ENCODE measurements at regions of chr5 and their contacts with region 1.

Region 1: GRCh38 chr5:160439205-160439600 is 17.5 kb downstream of the PTTG1 start:
- DNase-seq: peak; percentile 93
- H3K4me3 Mint-ChIP-seq: peak overlapping the region; percentile 80
- H3K27ac Mint-ChIP-seq: peak overlapping the region; percentile 94
- H3K4me1 Mint-ChIP-seq: peaks cover 30% of the 10 kb centered on the region
- H3K27me3 Mint-ChIP-seq: no peaks in the 10 kb centered on the region

Region 2: DNA sequence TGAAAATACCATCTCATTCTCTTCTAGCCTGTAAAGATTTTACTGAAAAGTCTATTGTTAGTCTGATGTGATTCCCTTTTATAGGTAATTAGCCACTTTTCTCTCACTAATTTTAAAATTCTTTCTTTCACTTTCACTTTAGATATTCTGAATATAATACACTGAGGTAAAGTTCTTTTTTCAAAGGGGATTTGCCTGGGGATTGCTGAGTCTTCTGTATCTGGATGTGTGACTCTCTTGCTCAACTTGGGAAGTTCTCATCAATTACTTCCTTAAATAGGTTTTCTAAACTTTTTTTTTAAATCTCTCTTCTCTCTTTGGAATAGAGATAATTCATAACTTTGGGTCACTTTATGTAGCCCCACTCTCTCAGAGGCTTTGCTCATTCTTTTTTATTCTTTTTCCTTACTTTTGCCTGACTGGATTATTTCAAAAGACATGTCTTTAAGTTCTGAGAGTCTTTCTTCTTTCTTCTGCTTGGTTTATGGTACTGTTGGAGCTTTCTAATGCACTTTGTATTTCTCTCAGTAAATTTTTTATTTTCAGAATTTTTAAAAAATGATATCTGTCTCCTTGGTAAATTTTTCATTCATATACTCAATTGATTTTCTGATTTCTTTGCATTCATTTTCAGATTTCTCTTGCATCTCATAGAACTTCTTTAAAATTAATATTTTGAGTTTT is 1053.0 kb before region 1 on chr5:
- CTCF ChIA-PET with region 1: no interaction called
- POLR2A ChIA-PET with region 1: no interaction called
- intact Hi-C with region 1: no loop called
- DNase-seq: no peak
- H3K4me3 Mint-ChIP-seq: no peak overlapping the region
- H3K27ac Mint-ChIP-seq: no peak overlapping the region
- H3K4me1 Mint-ChIP-seq: no peaks in the 10 kb centered on the region
- H3K27me3 Mint-ChIP-seq: no peaks in the 10 kb centered on the region

Region 3: DNA sequence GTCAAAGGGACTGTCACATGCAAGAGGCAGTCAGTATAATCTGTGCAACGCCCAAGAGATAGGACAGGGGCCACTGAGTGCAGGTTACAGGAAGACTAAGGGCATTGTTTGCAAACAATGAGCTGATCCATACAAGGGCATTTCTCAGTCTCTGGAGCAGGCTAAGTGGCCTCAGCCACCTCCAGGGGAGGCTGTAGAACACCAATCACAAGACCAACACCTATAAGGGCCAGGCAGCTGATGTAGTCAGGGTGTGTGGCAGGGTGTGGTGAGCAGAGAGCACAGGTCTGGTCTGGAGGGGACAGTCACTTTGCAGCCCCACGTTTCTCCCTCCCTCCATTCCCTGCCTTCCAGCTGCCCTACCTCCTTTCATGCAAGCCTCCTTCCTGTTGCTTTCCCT is 606.1 kb before region 1 on chr5:
- CTCF ChIA-PET with region 1: no interaction called
- POLR2A ChIA-PET with region 1: no interaction called
- intact Hi-C with region 1: no loop called
- DNase-seq: no peak
- H3K4me3 Mint-ChIP-seq: no peak overlapping the region
- H3K27ac Mint-ChIP-seq: no peak overlapping the region
- H3K4me1 Mint-ChIP-seq: no peaks in the 10 kb centered on the region
- H3K27me3 Mint-ChIP-seq: peaks cover 26% of the 10 kb centered on the region

Region 4: DNA sequence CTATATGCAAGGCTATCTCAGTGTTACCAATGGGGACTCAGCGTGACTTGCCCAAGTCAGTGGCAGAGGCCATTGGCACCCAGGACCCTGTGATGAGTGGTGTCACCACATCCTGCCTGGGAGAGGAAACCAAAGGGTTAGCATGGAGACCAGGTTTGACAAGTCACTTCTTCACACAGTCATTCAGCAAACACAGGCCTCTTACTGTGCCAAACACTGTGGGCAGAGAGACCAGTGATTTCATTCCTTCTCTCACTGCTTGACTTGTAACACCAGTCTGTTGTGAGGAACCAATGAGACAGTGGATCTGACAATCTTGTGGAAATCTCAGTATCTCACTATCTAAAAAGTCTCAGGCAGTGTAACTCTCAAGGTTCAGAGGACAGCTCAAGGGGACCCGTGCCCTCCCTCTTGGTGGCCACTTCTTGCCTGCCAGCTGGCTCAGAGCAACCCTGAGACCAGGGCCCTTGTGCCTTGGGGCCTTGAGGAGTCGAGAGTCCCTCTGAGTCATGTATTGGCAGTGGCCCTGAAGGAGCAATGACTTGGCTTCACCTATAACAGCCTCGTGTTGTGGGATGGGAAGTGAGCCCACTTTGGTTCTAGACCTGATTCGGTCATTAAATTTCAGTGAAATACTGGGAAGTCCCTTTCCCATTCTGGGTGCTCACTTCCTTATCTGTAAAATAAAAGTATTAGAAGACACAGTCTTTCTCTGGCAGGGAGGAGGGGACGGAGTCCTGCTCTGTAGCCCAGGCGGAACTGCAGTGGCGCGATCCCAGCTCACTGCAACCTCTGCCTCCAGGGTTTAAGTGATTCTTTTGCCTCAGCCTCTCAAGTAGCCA is 208.3 kb before region 1 on chr5:
- CTCF ChIA-PET with region 1: no interaction called
- POLR2A ChIA-PET with region 1: no interaction called
- intact Hi-C with region 1: no loop called
- DNase-seq: peak; percentile 44
- H3K4me3 Mint-ChIP-seq: no peak overlapping the region
- H3K27ac Mint-ChIP-seq: no peak overlapping the region
- H3K4me1 Mint-ChIP-seq: no peaks in the 10 kb centered on the region
- H3K27me3 Mint-ChIP-seq: no peaks in the 10 kb centered on the region

Region 5: DNA sequence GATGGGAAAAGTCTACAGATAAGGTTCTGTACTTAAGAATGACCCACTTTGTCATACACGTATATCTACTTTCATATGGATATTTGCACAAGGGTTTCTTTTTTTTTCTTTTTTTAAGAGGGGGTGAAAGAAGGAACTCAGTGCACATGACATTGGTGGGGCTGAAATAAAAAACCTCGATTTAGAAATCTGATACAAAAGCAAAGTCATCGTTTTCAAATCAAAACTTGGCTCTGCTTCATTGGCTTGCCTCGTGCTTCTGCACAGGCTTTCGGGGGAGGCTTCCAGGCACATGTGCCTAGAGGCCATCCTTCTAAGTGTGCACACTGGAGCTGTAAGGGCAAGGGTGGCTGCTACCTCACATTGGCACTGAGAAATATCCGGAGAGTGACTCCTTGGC is 13.6 kb after region 1 on chr5:
- CTCF ChIA-PET with region 1: interaction called, 11 read pairs
- POLR2A ChIA-PET with region 1: no interaction called
- intact Hi-C with region 1: no loop called
- DNase-seq: no peak
- H3K4me3 Mint-ChIP-seq: no peak overlapping the region
- H3K27ac Mint-ChIP-seq: no peak overlapping the region
- H3K4me1 Mint-ChIP-seq: peaks cover 14% of the 10 kb centered on the region
- H3K27me3 Mint-ChIP-seq: peaks cover 2% of the 10 kb centered on the region

Region 6: DNA sequence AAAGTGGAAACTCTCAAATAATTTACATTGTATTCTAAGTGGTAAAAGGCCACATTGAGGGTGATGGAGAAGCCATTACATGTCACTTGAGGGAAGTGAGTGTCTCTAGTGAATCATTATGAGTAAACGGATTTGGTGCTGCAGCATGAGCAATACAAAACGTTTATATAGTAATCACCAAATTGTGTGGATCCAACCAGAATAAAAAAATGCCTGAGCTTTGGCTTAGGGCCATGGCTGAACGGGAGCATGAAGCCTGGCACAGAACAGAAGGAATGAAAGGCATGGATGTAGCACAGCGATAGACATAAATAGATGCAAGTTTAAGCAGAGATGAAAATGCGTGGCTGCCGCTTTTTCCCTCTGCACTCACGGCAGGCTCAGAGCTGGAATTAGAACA is 40.7 kb after region 1 on chr5:
- CTCF ChIA-PET with region 1: interaction called, 28 read pairs
- POLR2A ChIA-PET with region 1: interaction called, 5 read pairs
- intact Hi-C with region 1: no loop called
- DNase-seq: no peak
- H3K4me3 Mint-ChIP-seq: peak overlapping the region; percentile 30
- H3K27ac Mint-ChIP-seq: peak overlapping the region; percentile 79
- H3K4me1 Mint-ChIP-seq: peaks cover 75% of the 10 kb centered on the region
- H3K27me3 Mint-ChIP-seq: no peaks in the 10 kb centered on the region

Region 7: GRCh38 chr5:160539431-160539830 is 100.2 kb after region 1 on chr5:
- CTCF ChIA-PET with region 1: interaction called, 8 read pairs
- POLR2A ChIA-PET with region 1: no interaction called
- intact Hi-C with region 1: loop called (anchors 1 kb)
- DNase-seq: peak; percentile 84
- H3K4me3 Mint-ChIP-seq: no peak overlapping the region
- H3K27ac Mint-ChIP-seq: no peak overlapping the region
- H3K4me1 Mint-ChIP-seq: peaks cover 24% of the 10 kb centered on the region
- H3K27me3 Mint-ChIP-seq: no peaks in the 10 kb centered on the region

Region 8: DNA sequence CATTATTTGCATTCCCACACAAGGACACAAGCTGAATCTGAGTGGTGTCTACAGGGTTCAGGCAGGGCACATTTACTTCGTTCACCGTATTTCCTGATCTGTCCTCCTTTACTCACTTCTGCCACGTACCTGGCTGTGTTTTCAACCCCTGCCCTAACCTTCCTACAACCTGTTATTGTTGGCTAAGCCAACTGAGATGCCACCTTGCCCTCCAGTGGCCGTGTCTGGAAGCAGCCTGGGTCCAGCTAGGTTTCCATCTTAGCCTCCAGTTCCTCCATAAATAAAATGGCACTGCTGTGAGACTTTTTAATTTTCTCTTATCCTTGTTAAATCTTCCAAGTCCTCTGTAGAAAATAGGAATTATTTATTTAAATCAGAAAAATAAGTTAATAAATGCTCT is 348.0 kb after region 1 on chr5:
- CTCF ChIA-PET with region 1: interaction called, 30 read pairs
- POLR2A ChIA-PET with region 1: no interaction called
- intact Hi-C with region 1: loop called (anchors 1 kb)
- DNase-seq: peak; percentile 36
- H3K4me3 Mint-ChIP-seq: no peak overlapping the region
- H3K27ac Mint-ChIP-seq: no peak overlapping the region
- H3K4me1 Mint-ChIP-seq: no peaks in the 10 kb centered on the region
- H3K27me3 Mint-ChIP-seq: peaks cover 3% of the 10 kb centered on the region

Region 9: DNA sequence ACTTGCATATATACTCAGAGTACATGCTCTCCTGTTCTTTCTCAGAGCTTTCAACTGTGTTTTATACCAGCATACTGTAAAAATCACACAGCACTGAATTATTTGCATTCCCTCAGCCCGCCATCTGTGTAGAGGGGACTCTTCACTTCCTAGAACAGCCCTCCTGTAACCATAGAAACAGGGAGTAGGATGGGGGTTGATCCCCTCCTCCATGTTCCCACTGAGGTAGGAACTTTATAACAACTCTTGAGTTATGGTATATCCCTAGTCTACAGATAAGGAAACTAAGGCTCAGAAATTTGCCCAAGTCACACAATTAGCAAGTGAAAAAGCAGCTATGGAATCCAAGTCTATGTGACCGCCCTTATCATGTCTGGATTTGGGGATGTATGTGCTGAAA is 476.6 kb after region 1 on chr5:
- CTCF ChIA-PET with region 1: no interaction called
- POLR2A ChIA-PET with region 1: no interaction called
- intact Hi-C with region 1: no loop called
- DNase-seq: no peak
- H3K4me3 Mint-ChIP-seq: no peak overlapping the region
- H3K27ac Mint-ChIP-seq: no peak overlapping the region
- H3K4me1 Mint-ChIP-seq: no peaks in the 10 kb centered on the region
- H3K27me3 Mint-ChIP-seq: peaks cover 5% of the 10 kb centered on the region

Region 10: GRCh38 chr5:161544350-161544765 is 1105.2 kb after region 1 on chr5:
- CTCF ChIA-PET with region 1: interaction called, 4 read pairs
- POLR2A ChIA-PET with region 1: no interaction called
- intact Hi-C with region 1: loop called (anchors 10 kb)
- DNase-seq: peak; percentile 40
- H3K4me3 Mint-ChIP-seq: no peak overlapping the region
- H3K27ac Mint-ChIP-seq: no peak overlapping the region
- H3K4me1 Mint-ChIP-seq: peaks cover 15% of the 10 kb centered on the region
- H3K27me3 Mint-ChIP-seq: peaks cover 44% of the 10 kb centered on the region

Measured in activated CD4-positive, alpha-beta memory T cell treated with anti-CD3 and anti-CD28 coated beads for 36 hours (primary cell).